ENCODE measurements at regions of chr12 and their contacts with region 1.

Region 1: DNA sequence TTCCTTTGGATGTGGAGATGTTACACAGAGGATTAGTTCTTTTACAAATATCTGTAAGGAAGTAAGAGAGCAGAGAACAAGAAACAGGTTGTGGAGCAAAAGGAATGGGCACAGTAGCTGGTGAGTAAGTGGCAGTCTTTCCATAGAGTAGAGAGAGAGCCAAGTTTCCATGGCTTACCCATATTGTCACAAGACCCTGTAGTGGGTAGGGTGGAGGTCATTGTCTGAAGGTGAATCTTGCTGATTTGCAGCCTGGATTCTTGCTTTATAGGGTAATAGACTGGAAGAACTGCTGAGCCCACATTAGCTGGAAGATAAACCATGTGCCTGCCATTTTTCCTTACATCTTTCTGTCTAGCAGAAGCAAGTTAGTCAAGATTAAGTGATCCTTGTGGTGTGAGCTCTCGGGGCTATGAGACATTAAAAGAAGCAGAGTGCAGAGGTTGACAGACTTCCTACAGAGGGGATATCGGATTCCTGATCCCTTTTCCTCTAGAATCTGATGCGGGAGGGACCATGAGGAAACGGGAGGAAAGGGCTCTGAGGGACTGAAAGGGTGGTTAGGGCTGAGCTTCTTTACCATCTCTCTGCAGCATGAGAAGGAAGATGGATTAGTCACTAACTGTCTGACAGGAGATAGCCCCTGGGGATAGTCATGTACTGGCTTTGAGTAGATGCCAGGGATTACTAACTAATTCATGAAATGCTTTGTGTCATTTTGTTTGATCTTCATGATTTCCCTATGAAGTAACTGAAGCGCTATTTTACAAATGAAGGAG is 44.0 kb upstream of the LRTM2 start:
- DNase-seq: no peak
- ATAC-seq: peak in 5 of 8 donors; percentile 32 to 74 (median 52)
- H3K4me3 ChIP-seq: no peak overlapping the region
- H3K27ac ChIP-seq: no peak overlapping the region
- H3K4me1 ChIP-seq: peaks cover 0 to 61% (median 37%) of the 10 kb centered on the region in 9 donors
- H3K27me3 ChIP-seq: no peaks in the 10 kb centered on the region
- CTCF ChIP-seq: no peak

Region 2: DNA sequence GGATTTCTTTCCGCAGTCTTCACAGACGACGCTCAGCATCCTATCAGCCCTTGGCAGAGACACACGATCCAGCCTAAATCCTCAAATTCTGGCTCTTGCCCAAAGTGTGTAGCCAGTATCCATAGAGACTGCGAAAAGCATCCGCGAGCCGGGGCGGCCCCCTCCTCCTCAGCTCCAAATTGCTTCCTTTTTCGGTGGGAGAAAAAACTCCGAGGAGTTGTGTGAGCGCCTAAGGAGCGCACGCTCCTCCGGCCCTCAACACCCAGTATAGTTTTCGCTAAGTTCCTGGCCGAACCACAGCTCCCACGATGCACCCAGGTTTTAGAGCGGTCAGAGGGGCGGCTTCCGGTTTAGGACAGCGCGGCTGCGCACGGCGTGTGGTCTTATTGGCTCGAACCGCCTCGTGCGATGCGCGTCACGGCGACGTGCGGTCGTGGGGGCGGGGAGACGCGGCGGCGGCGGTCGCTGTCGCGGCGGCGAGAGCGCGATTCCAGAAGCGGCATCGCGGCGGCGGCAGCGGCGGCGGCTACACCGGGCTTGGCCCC is 85.7 kb before region 1 on chr12 and contains the start of gene ADIPOR2:
- intact Hi-C with region 1: loop called in 2 of 10 experiments (anchors 5 kb)
- DNase-seq: peak; percentile 95 to 96
- ATAC-seq: peak; percentile 99 to 100 (median 100)
- H3K4me3 ChIP-seq: peak within 1 kb of the TSS; percentile 70 to 96 (median 84)
- H3K27ac ChIP-seq: peak within 1 kb of the TSS; percentile 85 to 97 (median 94)
- H3K4me1 ChIP-seq: peaks cover 0 to 38% (median 20%) of the 10 kb centered on the region in 9 donors
- H3K27me3 ChIP-seq: no peaks in the 10 kb centered on the region
- CTCF ChIP-seq: no peak
- total RNA-seq, gene ADIPOR2: 33.5 to 47.7 (median 42.1) TPM

Region 3: GRCh38 chr12:1698638-1699214 is 77.6 kb before region 1 on chr12:
- intact Hi-C with region 1: loop called in 3 of 10 experiments (anchors 5 to 10 kb)
- DNase-seq: no peak
- ATAC-seq: no peak
- H3K4me3 ChIP-seq: no peak overlapping the region
- H3K27ac ChIP-seq: no peak overlapping the region
- H3K4me1 ChIP-seq: peaks cover 9 to 45% (median 27%) of the 10 kb centered on the region in 9 donors
- H3K27me3 ChIP-seq: no peaks in the 10 kb centered on the region
- CTCF ChIP-seq: no peak

Region 4: GRCh38 chr12:1706633-1706981 is 69.8 kb before region 1 on chr12:
- intact Hi-C with region 1: loop called in 3 of 10 experiments (anchors 5 to 10 kb)
- DNase-seq: no peak
- ATAC-seq: no peak
- H3K4me3 ChIP-seq: no peak overlapping the region
- H3K27ac ChIP-seq: no peak overlapping the region
- H3K4me1 ChIP-seq: peaks cover 0 to 62% (median 25%) of the 10 kb centered on the region in 9 donors
- H3K27me3 ChIP-seq: no peaks in the 10 kb centered on the region
- CTCF ChIP-seq: no peak

Region 5: GRCh38 chr12:1719139-1719538 is 57.2 kb before region 1 on chr12:
- intact Hi-C with region 1: loop called in 1 of 10 experiments (anchors 5 kb)
- DNase-seq: no peak
- ATAC-seq: peak in 3 of 8 donors; percentile 25 to 67 (median 43)
- H3K4me3 ChIP-seq: no peak overlapping the region
- H3K27ac ChIP-seq: no peak overlapping the region
- H3K4me1 ChIP-seq: peaks cover 0 to 60% (median 48%) of the 10 kb centered on the region in 9 donors
- H3K27me3 ChIP-seq: no peaks in the 10 kb centered on the region
- CTCF ChIP-seq: no peak

Measured in heart right ventricle (tissue), 16 donors.